Activated naive CD4-positive, alpha-beta T cell treated with anti-CD3 and anti-CD28 coated beads, Interleukin-2, amount 10 ng/mL, durations not matched to agents 7 days and 5 days (primary cell): ENCODE measurements at regions of chr12 and their contacts with region 1.

Region 1: GRCh38 chr12:108649669-108650068 is 16.0 kb upstream of the SELPLG start:
- DNase-seq: no peak
- H3K4me3 Mint-ChIP-seq: no peak overlapping the region
- H3K27ac Mint-ChIP-seq: no peak overlapping the region
- H3K4me1 Mint-ChIP-seq: peaks cover 33% of the 10 kb centered on the region
- H3K27me3 Mint-ChIP-seq: no peaks in the 10 kb centered on the region

Region 2: GRCh38 chr12:108570743-108571608 is 78.7 kb before region 1 on chr12:
- CTCF ChIA-PET with region 1: interaction called, 10 read pairs
- DNase-seq: no peak
- H3K4me3 Mint-ChIP-seq: no peak overlapping the region
- H3K27ac Mint-ChIP-seq: peak overlapping the region; percentile 78
- H3K4me1 Mint-ChIP-seq: peaks cover 80% of the 10 kb centered on the region
- H3K27me3 Mint-ChIP-seq: peaks cover 5% of the 10 kb centered on the region

Region 3: GRCh38 chr12:108633534-108634248 is 16.0 kb before region 1 on chr12 and contains the start of gene SELPLG:
- CTCF ChIA-PET with region 1: interaction called, 28 read pairs
- DNase-seq: peak; percentile 94
- H3K4me3 Mint-ChIP-seq: peak within 1 kb of the TSS; percentile 100
- H3K27ac Mint-ChIP-seq: peak within 1 kb of the TSS; percentile 100
- H3K4me1 Mint-ChIP-seq: peaks cover 66% of the 10 kb centered on the region
- H3K27me3 Mint-ChIP-seq: peaks cover 3% of the 10 kb centered on the region